ENCODE measurements at regions of chr9 and their contacts with region 1.

Region 1: GRCh38 chr9:19369107-19369506 is 10.9 kb downstream of the RPS6 start:
- DNase-seq: no peak
- ATAC-seq: no peak
- H3K4me3 ChIP-seq: no peak overlapping the region
- H3K4me3 Mint-ChIP-seq: no peak overlapping the region
- H3K27ac ChIP-seq: no peak overlapping the region
- H3K27ac Mint-ChIP-seq: no peak overlapping the region
- H3K4me1 ChIP-seq: no peaks in the 10 kb centered on the region
- H3K4me1 Mint-ChIP-seq: peaks cover 7% of the 10 kb centered on the region
- H3K27me3 ChIP-seq: no peaks in the 10 kb centered on the region
- H3K27me3 Mint-ChIP-seq: no peaks in the 10 kb centered on the region
- CTCF ChIP-seq: no peak

Region 2: DNA sequence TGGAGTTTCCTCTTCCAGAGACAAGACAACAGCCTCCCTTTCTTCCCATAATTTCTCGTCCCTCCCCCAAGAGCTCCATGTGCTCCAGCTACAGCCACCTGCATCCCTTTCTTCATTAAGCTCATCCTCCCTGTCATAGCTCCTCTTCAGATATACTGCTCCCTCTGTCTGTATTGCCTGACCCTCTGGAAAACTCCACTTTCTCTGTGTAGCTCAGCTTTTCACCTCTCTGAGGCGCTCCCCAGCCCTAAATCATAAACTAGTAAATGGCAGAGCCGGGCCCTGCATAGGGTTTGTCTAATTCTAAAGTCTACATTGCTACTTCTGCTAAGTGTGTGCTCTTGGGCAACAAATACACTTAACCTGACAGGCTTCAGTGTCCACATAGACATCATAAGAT is 233.0 kb before region 1 on chr9:
- CTCF ChIA-PET with region 1: no interaction called
- POLR2A ChIA-PET with region 1: interaction called, 12 read pairs
- intact Hi-C with region 1: no loop called
- DNase-seq: no peak
- ATAC-seq: no peak
- H3K4me3 ChIP-seq: no peak overlapping the region
- H3K4me3 Mint-ChIP-seq: no peak overlapping the region
- H3K27ac ChIP-seq: no peak overlapping the region
- H3K27ac Mint-ChIP-seq: no peak overlapping the region
- H3K4me1 ChIP-seq: no peaks in the 10 kb centered on the region
- H3K4me1 Mint-ChIP-seq: peaks cover 3% of the 10 kb centered on the region
- H3K27me3 ChIP-seq: peaks cover 0 to 4% (median 0%) of the 10 kb centered on the region in 4 experiments
- H3K27me3 Mint-ChIP-seq: peaks cover 7% of the 10 kb centered on the region
- CTCF ChIP-seq: no peak

Region 3: GRCh38 chr9:19342947-19343346 is 26.2 kb before region 1 on chr9:
- CTCF ChIA-PET with region 1: no interaction called
- POLR2A ChIA-PET with region 1: no interaction called
- intact Hi-C with region 1: no loop called
- DNase-seq: no peak
- ATAC-seq: no peak
- H3K4me3 ChIP-seq: no peak overlapping the region
- H3K4me3 Mint-ChIP-seq: no peak overlapping the region
- H3K27ac ChIP-seq: no peak overlapping the region
- H3K27ac Mint-ChIP-seq: no peak overlapping the region
- H3K4me1 ChIP-seq: no peaks in the 10 kb centered on the region
- H3K4me1 Mint-ChIP-seq: no peaks in the 10 kb centered on the region
- H3K27me3 ChIP-seq: no peaks in the 10 kb centered on the region
- H3K27me3 Mint-ChIP-seq: no peaks in the 10 kb centered on the region
- CTCF ChIP-seq: no peak

Region 4: GRCh38 chr9:19441730-19442129 is 72.6 kb after region 1 on chr9:
- CTCF ChIA-PET with region 1: no interaction called
- POLR2A ChIA-PET with region 1: no interaction called
- intact Hi-C with region 1: no loop called
- DNase-seq: peak; percentile 53
- ATAC-seq: peak; percentile 67
- H3K4me3 ChIP-seq: peak overlapping the region; percentile 23 to 63 (median 55)
- H3K4me3 Mint-ChIP-seq: peak overlapping the region; percentile 72
- H3K27ac ChIP-seq: peak overlapping the region; percentile 57 to 81
- H3K27ac Mint-ChIP-seq: peak overlapping the region; percentile 51
- H3K4me1 ChIP-seq: peaks cover 15 to 19% of the 10 kb centered on the region in 2 donors
- H3K4me1 Mint-ChIP-seq: peaks cover 18% of the 10 kb centered on the region
- H3K27me3 ChIP-seq: no peaks in the 10 kb centered on the region
- H3K27me3 Mint-ChIP-seq: no peaks in the 10 kb centered on the region
- CTCF ChIP-seq: no peak